Activated T-helper 1 cell treated with anti-CD3 and anti-CD28 coated beads, Interleukin-12 subunit alpha, Interleukin-12 subunit beta, Interleukin-2, Interleukin-4 antibody, amounts not matched to agents 30 ng/mL and 10 ng/mL and 1 ng/mL, durations not matched to agents 14 hours and 24 hours and 36 hours (primary cell): ENCODE measurements at regions of chr19 and their contacts with region 1.

Region 1: GRCh38 chr19:29610563-29611271 is 4.6 kb downstream of the POP4 start:
- DNase-seq: peak; percentile 76
- H3K4me3 Mint-ChIP-seq: peak overlapping the region; percentile 19
- H3K27ac Mint-ChIP-seq: peak overlapping the region; percentile 6
- H3K4me1 Mint-ChIP-seq: peaks cover 19% of the 10 kb centered on the region
- H3K27me3 Mint-ChIP-seq: no peaks in the 10 kb centered on the region

Region 2: DNA sequence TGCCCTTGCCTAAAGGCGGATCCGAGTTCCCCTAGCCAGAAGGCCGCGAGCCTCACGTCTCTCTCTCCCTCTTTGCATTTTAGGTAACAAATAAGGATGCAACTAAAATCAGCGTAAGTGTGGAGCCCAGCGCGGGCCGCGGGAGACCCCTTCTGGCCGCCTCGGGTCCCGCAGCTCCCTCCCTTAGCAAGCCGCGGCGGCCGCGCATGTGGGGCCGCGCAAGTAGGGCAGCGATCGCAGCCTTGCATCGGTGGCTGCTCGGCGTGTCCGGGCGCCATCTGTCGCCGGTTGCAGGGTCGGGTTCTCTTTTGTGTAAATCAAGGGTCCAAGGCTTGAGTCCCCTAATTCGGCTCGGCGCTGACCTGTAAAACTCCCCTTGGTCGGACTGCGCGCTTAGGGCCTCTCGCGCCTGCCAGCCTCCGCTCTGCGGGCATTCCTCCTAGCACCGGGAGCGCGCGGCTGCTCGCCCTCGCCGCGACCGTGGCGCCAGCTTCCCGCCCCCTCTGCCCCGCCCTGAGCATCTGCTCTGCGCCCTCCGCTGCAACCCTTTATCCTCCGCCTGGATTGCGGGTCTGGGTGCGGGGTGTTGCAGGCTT is 82.3 kb before region 1 on chr19:
- intact Hi-C with region 1: loop called (anchors 5 kb)
- DNase-seq: peak; percentile 62
- H3K4me3 Mint-ChIP-seq: peak overlapping the region; percentile 72
- H3K27ac Mint-ChIP-seq: peak overlapping the region; percentile 79
- H3K4me1 Mint-ChIP-seq: peaks cover 20% of the 10 kb centered on the region
- H3K27me3 Mint-ChIP-seq: peaks cover 67% of the 10 kb centered on the region

Region 3: DNA sequence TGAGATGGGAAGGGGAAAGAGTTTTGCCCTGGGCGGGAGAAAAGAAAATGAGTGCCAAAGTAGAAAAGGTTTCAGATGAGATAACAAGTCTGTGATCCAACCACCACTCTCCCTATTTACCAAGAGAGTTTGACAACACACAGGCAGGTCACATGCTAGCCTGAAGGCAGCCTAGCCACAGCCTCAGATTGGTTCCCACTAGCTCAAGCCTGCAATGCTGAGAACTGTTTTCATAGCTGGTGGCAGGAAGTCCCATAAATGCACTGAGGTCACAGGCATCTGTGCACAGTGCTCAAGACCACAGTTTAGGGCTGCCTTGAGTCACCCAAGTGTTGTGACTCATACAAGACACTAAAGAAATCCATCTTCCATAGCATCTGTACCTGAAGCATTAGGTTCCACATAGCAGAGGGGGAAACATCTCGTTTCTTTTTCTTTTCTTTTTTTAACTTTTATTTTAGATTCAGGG is 23.2 kb before region 1 on chr19:
- intact Hi-C with region 1: loop called (anchors 1 kb)
- DNase-seq: peak; percentile 80
- H3K4me3 Mint-ChIP-seq: no peak overlapping the region
- H3K27ac Mint-ChIP-seq: peak overlapping the region; percentile 72
- H3K4me1 Mint-ChIP-seq: peaks cover 58% of the 10 kb centered on the region
- H3K27me3 Mint-ChIP-seq: peaks cover 3% of the 10 kb centered on the region

Region 4: DNA sequence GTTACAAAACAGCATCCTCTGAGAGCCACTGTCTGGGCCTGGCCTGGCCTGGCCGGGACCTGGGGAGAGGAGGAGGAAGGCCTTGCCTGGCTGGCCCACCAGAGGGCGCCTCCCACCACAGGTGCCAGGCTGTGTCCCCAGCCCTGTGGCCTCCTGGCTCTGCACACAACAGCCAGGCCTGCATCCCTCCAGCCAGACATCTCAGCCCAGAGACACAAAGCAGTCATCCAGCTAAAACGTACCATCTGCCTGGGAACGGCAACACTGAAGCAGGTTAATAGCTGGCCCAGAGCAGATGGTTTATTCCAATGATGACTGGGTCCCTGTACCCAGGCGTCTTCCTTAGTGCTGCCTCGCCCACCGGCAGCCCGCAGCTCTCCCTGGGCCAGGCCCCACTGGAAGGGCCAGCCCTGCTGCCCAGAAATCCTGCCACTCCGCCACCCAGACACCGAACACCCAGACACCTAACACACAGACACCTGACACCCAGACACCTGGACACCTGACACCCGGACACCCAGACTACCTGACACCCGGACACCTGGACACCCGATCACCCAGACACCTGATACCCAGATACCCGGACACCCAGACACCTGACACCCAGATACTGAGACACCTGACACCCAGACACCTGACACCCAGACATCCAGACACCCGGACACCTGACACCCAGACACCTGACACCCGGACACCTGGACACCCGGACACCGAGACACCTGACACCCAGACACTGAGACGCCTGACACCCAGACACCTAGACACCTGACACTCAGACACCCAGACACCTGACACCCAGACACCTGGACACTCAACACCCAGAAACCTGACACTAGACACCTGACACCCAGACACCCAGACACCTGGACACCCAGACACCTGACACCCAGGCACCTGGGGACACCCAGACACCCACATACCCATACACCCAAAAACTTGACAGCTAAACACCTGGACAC is 84.2 kb after region 1 on chr19:
- intact Hi-C with region 1: loop called (anchors 1 kb)
- DNase-seq: peak; percentile 73
- H3K4me3 Mint-ChIP-seq: no peak overlapping the region
- H3K27ac Mint-ChIP-seq: peak overlapping the region; percentile 70
- H3K4me1 Mint-ChIP-seq: peaks cover 15% of the 10 kb centered on the region
- H3K27me3 Mint-ChIP-seq: no peaks in the 10 kb centered on the region

Region 5: DNA sequence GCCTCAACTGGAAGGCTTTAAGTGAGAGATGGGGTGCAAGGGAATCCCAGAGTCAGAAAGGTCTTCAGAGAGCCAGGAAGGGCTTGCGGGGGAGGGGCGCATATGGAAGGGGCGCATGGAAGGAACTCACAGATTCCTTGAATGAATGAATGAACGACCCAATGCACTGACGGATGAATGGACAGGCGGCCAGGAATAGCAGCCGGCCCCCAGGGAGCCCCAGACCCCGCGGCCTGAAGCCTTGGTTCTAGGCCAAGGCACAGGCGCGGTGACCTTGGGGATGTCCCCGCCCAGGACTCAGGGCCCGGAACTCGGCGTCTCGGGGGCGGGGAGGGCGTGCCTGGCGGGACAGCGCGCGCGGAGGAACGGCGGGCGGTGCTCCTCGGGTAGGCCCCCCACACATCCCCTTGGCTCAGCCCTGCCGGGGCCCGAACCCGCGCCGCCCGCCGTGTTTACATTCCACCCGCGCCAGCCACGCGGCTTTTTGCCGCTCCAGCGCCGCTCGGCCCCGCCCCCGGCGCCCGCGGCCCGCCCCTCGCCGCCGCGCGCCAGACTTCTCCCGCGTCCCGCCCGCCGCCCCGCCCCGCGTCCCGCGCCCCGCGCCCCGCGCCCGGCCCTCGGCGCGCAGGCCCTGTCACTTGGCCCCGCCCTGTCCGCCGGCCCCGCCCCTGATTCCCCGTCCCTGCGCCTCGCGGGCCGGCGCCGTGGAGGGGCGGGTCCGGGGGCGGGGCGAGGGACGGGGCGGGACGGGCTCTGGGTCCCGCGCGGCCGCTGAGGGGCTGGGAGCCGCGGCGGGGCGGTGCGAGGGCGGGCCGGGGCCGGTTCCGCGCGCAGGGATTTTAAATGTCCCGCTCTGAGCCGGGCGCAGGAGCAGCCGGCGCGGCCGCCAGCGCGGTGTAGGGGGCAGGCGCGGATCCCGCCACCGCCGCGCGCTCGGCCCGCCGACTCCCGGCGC is 200.7 kb after region 1 on chr19 and contains the start of gene CCNE1:
- intact Hi-C with region 1: loop called (anchors 1 kb)
- DNase-seq: peak; percentile 92
- H3K4me3 Mint-ChIP-seq: peak within 1 kb of the TSS; percentile 97
- H3K27ac Mint-ChIP-seq: peak within 1 kb of the TSS; percentile 92
- H3K4me1 Mint-ChIP-seq: peaks cover 38% of the 10 kb centered on the region
- H3K27me3 Mint-ChIP-seq: no peaks in the 10 kb centered on the region
- total RNA-seq, gene CCNE1: 55.1 and 58.4 TPM in 2 replicates

Region 6: GRCh38 chr19:29873024-29873800 is 262.5 kb after region 1 on chr19:
- intact Hi-C with region 1: loop called (anchors 2 kb)
- DNase-seq: peak; percentile 61
- H3K4me3 Mint-ChIP-seq: peak overlapping the region; percentile 61
- H3K27ac Mint-ChIP-seq: no peak overlapping the region
- H3K4me1 Mint-ChIP-seq: peaks cover 11% of the 10 kb centered on the region
- H3K27me3 Mint-ChIP-seq: peaks cover 8% of the 10 kb centered on the region